Ovary (tissue), 10 donors: ENCODE measurements at regions of chr5 and their contacts with region 1.

Region 1: GRCh38 chr5:67156976-67157583 is 39.5 kb downstream of the CD180 start:
- DNase-seq: no peak
- H3K4me3 ChIP-seq: no peak overlapping the region
- H3K27ac ChIP-seq: no peak overlapping the region
- H3K4me1 ChIP-seq: no peaks in the 10 kb centered on the region
- H3K27me3 ChIP-seq: no peaks in the 10 kb centered on the region
- CTCF ChIP-seq: peak in 1 of 3 donors; percentile 45
- EP300 ChIP-seq: no peak
- POLR2A ChIP-seq: no peak

Region 2: GRCh38 chr5:66807743-66808142 is 349.3 kb before region 1 on chr5:
- intact Hi-C with region 1: loop called in 2 of 4 experiments (anchors 10 kb)
- DNase-seq: no peak
- H3K4me3 ChIP-seq: no peak overlapping the region
- H3K27ac ChIP-seq: no peak overlapping the region
- H3K4me1 ChIP-seq: no peaks in the 10 kb centered on the region
- H3K27me3 ChIP-seq: no peaks in the 10 kb centered on the region
- CTCF ChIP-seq: no peak
- EP300 ChIP-seq: no peak
- POLR2A ChIP-seq: no peak

Region 3: DNA sequence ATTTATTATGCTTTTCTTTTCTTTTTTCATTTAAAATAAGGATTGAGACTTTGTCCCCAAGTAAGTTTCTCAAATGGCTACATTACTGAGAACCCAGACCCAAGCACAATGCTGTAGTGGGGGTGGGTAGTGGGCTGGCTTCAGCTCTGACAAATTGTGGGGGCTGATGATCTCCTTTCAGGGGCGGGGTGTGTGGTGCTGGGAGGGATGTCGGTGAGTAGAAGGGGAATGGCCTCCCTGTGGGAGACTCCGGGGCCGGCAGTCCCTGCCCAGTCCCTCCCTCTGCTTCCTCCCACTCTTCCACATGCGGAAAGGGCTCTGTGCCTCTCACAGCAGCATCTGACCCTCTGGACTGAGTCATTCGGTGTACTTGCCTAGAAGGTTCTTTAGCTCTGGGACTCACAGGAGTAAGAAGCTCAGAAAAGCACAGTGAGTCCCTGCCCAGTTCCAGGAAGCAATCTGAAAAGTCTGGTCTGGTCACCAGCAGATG is 25.3 kb after region 1 on chr5:
- intact Hi-C with region 1: no loop called
- DNase-seq: peak; percentile 37 to 70 (median 61)
- H3K4me3 ChIP-seq: no peak overlapping the region
- H3K27ac ChIP-seq: peak overlapping the region in 1 of 2 donors; percentile 13
- H3K4me1 ChIP-seq: no peaks in the 10 kb centered on the region
- H3K27me3 ChIP-seq: no peaks in the 10 kb centered on the region
- CTCF ChIP-seq: no peak
- EP300 ChIP-seq: no peak
- POLR2A ChIP-seq: no peak

Region 4: GRCh38 chr5:67530609-67531255 is 373.7 kb after region 1 on chr5:
- intact Hi-C with region 1: no loop called
- DNase-seq: no peak
- H3K4me3 ChIP-seq: no peak overlapping the region
- H3K27ac ChIP-seq: no peak overlapping the region
- H3K4me1 ChIP-seq: no peaks in the 10 kb centered on the region
- H3K27me3 ChIP-seq: no peaks in the 10 kb centered on the region
- CTCF ChIP-seq: no peak
- EP300 ChIP-seq: no peak
- POLR2A ChIP-seq: no peak

Region 5: GRCh38 chr5:67844924-67845323 is 687.8 kb after region 1 on chr5:
- intact Hi-C with region 1: no loop called
- DNase-seq: no peak
- H3K4me3 ChIP-seq: no peak overlapping the region
- H3K27ac ChIP-seq: no peak overlapping the region
- H3K4me1 ChIP-seq: no peaks in the 10 kb centered on the region
- H3K27me3 ChIP-seq: no peaks in the 10 kb centered on the region
- CTCF ChIP-seq: no peak
- EP300 ChIP-seq: no peak
- POLR2A ChIP-seq: no peak